Activated naive CD8-positive, alpha-beta T cell treated with anti-CD3 and anti-CD28 coated beads, Interleukin-2, amount 10 ng/mL, durations not matched to agents 7 days and 5 days (primary cell): ENCODE measurements at regions of chr14 and their contacts with region 1.

Region 1: GRCh38 chr14:23301288-23301968 is 1.2 kb downstream of the PPP1R3E start:
- DNase-seq: peak; percentile 100
- ATAC-seq: peak; percentile 83
- H3K4me3 Mint-ChIP-seq: peak overlapping the region; percentile 96
- H3K27ac Mint-ChIP-seq: peak overlapping the region; percentile 97
- H3K4me1 Mint-ChIP-seq: peaks cover 17% of the 10 kb centered on the region
- H3K27me3 Mint-ChIP-seq: peaks cover 7% of the 10 kb centered on the region

Region 2: GRCh38 chr14:23286020-23286905 is 15.2 kb before region 1 on chr14 and contains the start of gene HOMEZ:
- POLR2A ChIA-PET with region 1: interaction called, 14 read pairs
- DNase-seq: peak; percentile 96
- ATAC-seq: peak; percentile 99
- H3K4me3 Mint-ChIP-seq: peak within 1 kb of the TSS; percentile 93
- H3K27ac Mint-ChIP-seq: peak within 1 kb of the TSS; percentile 89
- H3K4me1 Mint-ChIP-seq: peaks cover 16% of the 10 kb centered on the region
- H3K27me3 Mint-ChIP-seq: no peaks in the 10 kb centered on the region
- total RNA-seq, gene HOMEZ: 11.8 to 12.8 TPM